GM10248 (cell line): ENCODE measurements at regions of chr3 and their contacts with region 1.

Region 1: GRCh38 chr3:4776980-4777581 is 202.2 kb upstream of the BHLHE40 start:
- DNase-seq: peak; percentile 71
- CTCF ChIP-seq: no peak

Region 2: DNA sequence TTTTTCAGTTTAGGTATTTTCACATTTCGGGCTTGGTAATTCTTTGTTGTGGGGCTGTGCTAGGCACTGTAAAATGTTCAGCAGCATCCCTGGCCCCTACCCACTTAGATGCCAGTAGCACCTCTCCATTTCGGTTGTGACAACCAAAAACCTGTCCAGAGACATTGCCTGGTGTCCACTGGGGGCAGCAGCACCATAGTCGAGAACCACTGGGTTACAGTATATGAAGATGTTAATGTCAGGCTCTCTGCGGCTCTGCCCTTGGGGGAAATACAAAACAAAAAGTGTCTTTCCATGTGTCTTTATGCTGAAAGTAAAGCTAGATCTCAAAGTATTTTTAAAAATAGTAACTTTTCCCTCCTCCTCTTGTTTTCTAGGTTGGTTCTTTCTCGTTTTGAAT is 106.7 kb before region 1 on chr3:
- CTCF ChIA-PET with region 1: no interaction called
- POLR2A ChIA-PET with region 1: no interaction called
- DNase-seq: no peak
- CTCF ChIP-seq: no peak

Region 3: GRCh38 chr3:4751502-4752101 is 25.5 kb before region 1 on chr3:
- CTCF ChIA-PET with region 1: interaction called, 56 read pairs
- POLR2A ChIA-PET with region 1: interaction called, 11 read pairs
- DNase-seq: peak; percentile 49
- CTCF ChIP-seq: no peak

Region 4: DNA sequence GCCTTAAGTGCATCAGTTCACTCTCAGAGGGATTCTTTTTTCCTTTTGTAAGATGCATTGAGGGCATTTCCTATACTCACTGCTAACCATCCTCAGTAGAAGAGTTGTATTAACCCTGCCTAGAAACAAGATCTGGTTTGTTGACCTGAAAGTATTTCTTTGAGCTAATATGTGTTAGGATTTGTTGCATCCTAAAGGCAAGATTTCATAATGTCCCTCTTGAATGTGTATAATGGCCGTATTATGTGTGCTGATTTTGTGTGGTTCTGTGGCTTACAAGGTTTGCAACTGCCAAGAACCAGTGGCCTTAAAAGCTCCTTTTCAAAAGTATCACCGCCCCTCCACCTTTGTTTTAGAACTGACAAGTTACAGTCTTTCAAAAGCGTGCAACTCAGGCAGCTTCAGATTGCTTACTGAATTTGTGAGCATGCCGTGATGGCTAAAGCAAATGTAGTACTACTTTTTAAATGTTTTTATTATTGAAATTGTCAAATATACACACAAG is 20.2 kb after region 1 on chr3:
- CTCF ChIA-PET with region 1: interaction called, 10 read pairs
- POLR2A ChIA-PET with region 1: no interaction called
- DNase-seq: no peak
- CTCF ChIP-seq: no peak